IMR-90 (cell line): ENCODE measurements at regions of chr1 and their contacts with region 1.

Region 1: GRCh38 chr1:172220376-172220775 is 200.1 kb upstream of the C1orf105 start:
- DNase-seq: no peak
- ATAC-seq: no peak
- H3K4me3 ChIP-seq: no peak overlapping the region
- H3K27ac ChIP-seq: no peak overlapping the region; the same call in 1 of the 2 replicates
- H3K4me1 ChIP-seq: peaks cover 4% of the 10 kb centered on the region; the same call in 1 of the 2 replicates
- H3K27me3 ChIP-seq: no peaks in the 10 kb centered on the region
- CTCF ChIP-seq: no peak
- POLR2A ChIP-seq: no peak
- RAD21 ChIP-seq: no peak

Region 2: DNA sequence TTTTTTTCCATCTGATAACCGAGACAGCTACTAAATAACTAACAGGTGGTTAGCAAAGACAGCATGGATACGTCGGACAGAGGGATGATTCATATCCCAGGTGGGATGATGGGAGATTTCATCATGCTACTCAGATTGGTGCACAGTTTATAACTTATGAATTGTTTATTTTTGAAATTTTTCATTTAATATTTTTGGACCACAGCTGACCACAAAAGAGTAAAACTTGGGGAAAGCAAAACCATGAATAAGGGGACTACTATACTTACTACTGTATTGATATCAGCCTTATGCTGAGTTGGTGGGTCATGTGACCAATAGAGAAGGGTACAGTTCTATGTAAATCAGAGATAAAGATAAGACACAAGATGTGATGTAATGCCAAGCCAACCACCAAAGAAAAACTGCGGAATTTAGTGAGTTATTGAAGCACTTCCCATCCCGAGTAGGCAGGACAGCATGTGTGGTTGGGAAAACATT is 48.0 kb before region 1 on chr1:
- CTCF ChIA-PET with region 1: no interaction called
- POLR2A ChIA-PET with region 1: no interaction called
- dilution Hi-C with region 1: no loop called
- in situ Hi-C with region 1: no loop called
- intact Hi-C with region 1: loop called (anchors 5 kb)
- DNase-seq: peak; percentile 62
- ATAC-seq: peak; percentile 29
- H3K4me3 ChIP-seq: no peak overlapping the region
- H3K27ac ChIP-seq: no peak overlapping the region
- H3K4me1 ChIP-seq: peaks cover 4% of the 10 kb centered on the region; the same call in 1 of the 2 replicates
- H3K27me3 ChIP-seq: no peaks in the 10 kb centered on the region
- CTCF ChIP-seq: no peak
- POLR2A ChIP-seq: no peak
- RAD21 ChIP-seq: no peak

Region 3: GRCh38 chr1:172180501-172181285 is 39.7 kb before region 1 on chr1:
- CTCF ChIA-PET with region 1: interaction called, 3 read pairs
- POLR2A ChIA-PET with region 1: no interaction called
- dilution Hi-C with region 1: no loop called
- in situ Hi-C with region 1: no loop called
- intact Hi-C with region 1: loop called (anchors 5 kb)
- DNase-seq: peak; percentile 70
- ATAC-seq: peak; percentile 67
- H3K4me3 ChIP-seq: peak overlapping the region; percentile 52; the same call in 1 of the 2 replicates
- H3K27ac ChIP-seq: peak overlapping the region; percentile 99
- H3K4me1 ChIP-seq: peaks cover 12% of the 10 kb centered on the region
- H3K27me3 ChIP-seq: no peaks in the 10 kb centered on the region
- CTCF ChIP-seq: no peak
- POLR2A ChIP-seq: no peak
- RAD21 ChIP-seq: no peak

Region 4: GRCh38 chr1:172308142-172308541 is 87.8 kb after region 1 on chr1:
- CTCF ChIA-PET with region 1: no interaction called
- POLR2A ChIA-PET with region 1: no interaction called
- dilution Hi-C with region 1: no loop called
- in situ Hi-C with region 1: no loop called
- intact Hi-C with region 1: no loop called
- DNase-seq: no peak
- ATAC-seq: no peak; the same call in 1 of the 2 replicates
- H3K4me3 ChIP-seq: no peak overlapping the region
- H3K27ac ChIP-seq: no peak overlapping the region
- H3K4me1 ChIP-seq: no peaks in the 10 kb centered on the region
- H3K27me3 ChIP-seq: no peaks in the 10 kb centered on the region
- CTCF ChIP-seq: no peak
- POLR2A ChIP-seq: no peak
- RAD21 ChIP-seq: no peak

Region 5: GRCh38 chr1:172460887-172461315 is 240.5 kb after region 1 on chr1:
- CTCF ChIA-PET with region 1: no interaction called
- POLR2A ChIA-PET with region 1: no interaction called
- dilution Hi-C with region 1: no loop called
- in situ Hi-C with region 1: no loop called
- intact Hi-C with region 1: no loop called
- DNase-seq: no peak
- ATAC-seq: no peak
- H3K4me3 ChIP-seq: no peak overlapping the region
- H3K27ac ChIP-seq: no peak overlapping the region
- H3K4me1 ChIP-seq: no peaks in the 10 kb centered on the region
- H3K27me3 ChIP-seq: peaks cover 17% of the 10 kb centered on the region
- CTCF ChIP-seq: no peak
- POLR2A ChIP-seq: no peak
- RAD21 ChIP-seq: no peak